Heart right ventricle (tissue), 16 donors: ENCODE measurements at regions of chr12 and their contacts with region 1.

Region 1: GRCh38 chr12:56189176-56189917 is at the start of gene SMARCC2:
- DNase-seq: peak; percentile 87 to 88
- ATAC-seq: peak; percentile 84 to 94 (median 92)
- H3K4me3 ChIP-seq: peak within 1 kb of the TSS; percentile 61 to 92 (median 86)
- H3K27ac ChIP-seq: peak within 1 kb of the TSS; percentile 78 to 95 (median 92)
- H3K4me1 ChIP-seq: peaks cover 6 to 39% (median 27%) of the 10 kb centered on the region in 9 donors
- H3K27me3 ChIP-seq: no peaks in the 10 kb centered on the region
- CTCF ChIP-seq: peak; percentile 63 to 81 (median 74)
- total RNA-seq, gene SMARCC2: 56.2 to 81.9 (median 62.8) TPM

Region 2: GRCh38 chr12:56041552-56042429 is 147.6 kb before region 1 on chr12 and contains the start of gene RPS26:
- intact Hi-C with region 1: loop called in 1 of 10 experiments (anchors 10 kb)
- DNase-seq: peak; percentile 94 to 98
- ATAC-seq: peak; percentile 95 to 99 (median 97)
- H3K4me3 ChIP-seq: peak within 1 kb of the TSS; percentile 57 to 96 (median 80)
- H3K27ac ChIP-seq: peak within 1 kb of the TSS; percentile 92 to 99 (median 97)
- H3K4me1 ChIP-seq: peaks cover 0 to 23% (median 18%) of the 10 kb centered on the region in 9 donors
- H3K27me3 ChIP-seq: no peaks in the 10 kb centered on the region
- CTCF ChIP-seq: peak in 8 of 9 donors; percentile 34 to 69 (median 54)
- total RNA-seq, gene RPS26: 6.9 to 39.6 (median 19.3) TPM

Region 3: GRCh38 chr12:56117778-56118687 is 71.3 kb before region 1 on chr12 and contains the start of gene ZC3H10:
- intact Hi-C with region 1: loop called in 8 of 10 experiments (anchors 1 to 5 kb)
- DNase-seq: peak; percentile 93 to 97
- ATAC-seq: peak; percentile 81 to 91 (median 88)
- H3K4me3 ChIP-seq: peak within 1 kb of the TSS; percentile 53 to 84 (median 74)
- H3K27ac ChIP-seq: peak within 1 kb of the TSS; percentile 82 to 95 (median 91)
- H3K4me1 ChIP-seq: peaks cover 0 to 56% (median 38%) of the 10 kb centered on the region in 9 donors
- H3K27me3 ChIP-seq: no peaks in the 10 kb centered on the region
- CTCF ChIP-seq: peak in 8 of 9 donors; percentile 43 to 78 (median 52)
- total RNA-seq, gene ZC3H10: 3.6 to 5.8 (median 4.9) TPM

Region 4: DNA sequence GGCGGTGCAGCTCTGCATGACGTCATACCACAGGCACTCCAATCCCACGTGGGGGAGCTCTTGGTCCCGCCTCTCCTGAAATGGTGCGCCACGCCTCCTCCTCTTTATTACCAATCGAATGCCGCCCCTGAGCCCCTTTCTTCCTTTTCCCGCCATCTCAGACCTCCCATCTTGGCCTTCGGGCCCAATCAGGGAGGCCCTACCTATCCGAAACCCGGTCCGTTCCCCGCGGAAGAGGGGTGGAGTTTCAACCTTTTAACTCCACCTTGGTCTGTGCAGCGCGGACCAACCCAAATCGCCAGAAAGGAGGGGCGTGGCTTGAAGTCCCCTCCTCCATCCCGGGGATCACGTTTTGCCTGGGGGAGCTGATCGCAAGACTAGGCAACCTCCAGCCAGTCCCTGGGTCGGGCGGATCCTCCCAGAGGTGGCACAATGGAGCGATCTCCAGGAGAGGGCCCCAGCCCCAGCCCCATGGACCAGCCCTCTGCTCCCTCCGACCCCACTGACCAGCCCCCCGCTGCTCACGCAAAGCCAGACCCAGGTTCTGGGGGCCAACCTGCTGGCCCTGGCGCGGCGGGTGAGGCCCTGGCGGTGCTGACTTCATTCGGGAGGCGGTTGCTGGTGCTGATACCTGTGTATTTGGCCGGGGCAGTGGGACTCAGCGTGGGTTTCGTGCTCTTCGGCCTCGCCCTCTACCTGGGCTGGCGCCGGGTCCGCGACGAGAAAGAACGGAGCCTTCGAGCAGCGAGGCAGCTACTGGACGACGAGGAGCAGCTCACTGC is 61.3 kb before region 1 on chr12 and contains the start of gene ESYT1:
- intact Hi-C with region 1: loop called in 6 of 10 experiments (anchors 1 to 5 kb)
- DNase-seq: peak; percentile 95 to 99
- ATAC-seq: peak; percentile 94 to 97 (median 96)
- H3K4me3 ChIP-seq: peak within 1 kb of the TSS; percentile 53 to 94 (median 84)
- H3K27ac ChIP-seq: peak within 1 kb of the TSS; percentile 51 to 94 (median 88)
- H3K4me1 ChIP-seq: peaks cover 8 to 61% (median 44%) of the 10 kb centered on the region in 9 donors
- H3K27me3 ChIP-seq: no peaks in the 10 kb centered on the region
- CTCF ChIP-seq: peak in 1 of 9 donors; percentile 18
- total RNA-seq, gene ESYT1: 28.8 to 47.5 (median 31.9) TPM

Region 5: DNA sequence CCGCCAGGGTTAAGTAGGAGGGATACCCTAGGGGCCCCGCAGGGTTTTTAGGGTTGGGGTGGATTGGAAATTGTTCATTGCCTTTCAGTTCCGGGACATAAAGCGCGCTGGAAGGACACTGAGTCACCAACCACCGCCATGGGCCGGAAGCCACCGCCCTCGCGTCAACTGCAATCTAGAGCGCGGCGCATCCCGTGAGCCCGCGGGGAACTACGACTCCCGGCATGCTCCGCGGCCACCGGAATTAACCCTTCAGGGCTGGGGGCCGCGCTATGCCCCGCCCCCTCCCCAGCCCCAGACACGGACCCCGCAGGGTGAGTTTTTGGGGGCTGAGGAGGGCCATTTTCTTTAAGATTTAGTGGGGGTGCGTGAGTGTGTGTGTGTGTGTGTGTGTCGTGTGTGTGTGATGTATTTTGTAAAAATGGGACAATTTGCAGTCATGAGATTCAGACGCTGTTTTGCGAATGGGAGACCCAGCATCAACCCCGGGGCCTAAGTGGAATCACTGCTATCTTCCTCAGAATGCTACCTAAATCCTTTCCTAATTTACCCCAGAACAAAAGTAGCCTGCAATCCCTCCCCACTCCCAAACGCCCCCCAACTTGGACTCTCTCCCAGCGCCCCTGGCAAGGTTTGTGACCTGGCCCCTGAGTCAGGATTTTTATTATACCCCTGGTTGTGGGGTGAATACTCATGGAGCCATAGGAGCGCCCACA is 36.9 kb before region 1 on chr12 and contains the start of gene MYL6B:
- intact Hi-C with region 1: loop called in 1 of 10 experiments (anchors 2 kb)
- DNase-seq: peak; percentile 93 to 94
- ATAC-seq: peak; percentile 93 to 98 (median 96)
- H3K4me3 ChIP-seq: peak within 1 kb of the TSS; percentile 38 to 85 (median 69)
- H3K27ac ChIP-seq: peak within 1 kb of the TSS; percentile 89 to 97 (median 93)
- H3K4me1 ChIP-seq: peaks cover 4 to 41% (median 35%) of the 10 kb centered on the region in 9 donors
- H3K27me3 ChIP-seq: no peaks in the 10 kb centered on the region
- CTCF ChIP-seq: no peak
- total RNA-seq, gene MYL6B: 39.8 to 61.9 (median 49.9) TPM

Region 6: GRCh38 chr12:56158029-56158925 is 31.1 kb before region 1 on chr12 and contains the start of gene MYL6:
- intact Hi-C with region 1: loop called in 3 of 10 experiments (anchors 2 kb)
- DNase-seq: peak; percentile 86 to 99
- ATAC-seq: peak; percentile 85 to 96 (median 93)
- H3K4me3 ChIP-seq: peak within 1 kb of the TSS; percentile 73 to 98 (median 91)
- H3K27ac ChIP-seq: peak within 1 kb of the TSS; percentile 93 to 99 (median 98)
- H3K4me1 ChIP-seq: peaks cover 20 to 53% (median 42%) of the 10 kb centered on the region in 9 donors
- H3K27me3 ChIP-seq: no peaks in the 10 kb centered on the region
- CTCF ChIP-seq: no peak
- total RNA-seq, gene MYL6: 355 to 1,188 (median 413) TPM

Region 7: GRCh38 chr12:56224102-56224701 is 34.9 kb after region 1 on chr12 and contains the start of gene NABP2:
- intact Hi-C with region 1: loop called in 6 of 10 experiments (anchors 1 to 5 kb)
- DNase-seq: peak; percentile 98
- ATAC-seq: peak; percentile 83 to 92 (median 89)
- H3K4me3 ChIP-seq: peak within 1 kb of the TSS; percentile 50 to 78 (median 70)
- H3K27ac ChIP-seq: peak within 1 kb of the TSS; percentile 51 to 99 (median 88)
- H3K4me1 ChIP-seq: peaks cover 4 to 49% (median 39%) of the 10 kb centered on the region in 9 donors
- H3K27me3 ChIP-seq: no peaks in the 10 kb centered on the region
- CTCF ChIP-seq: peak; percentile 76 to 98 (median 89)
- total RNA-seq, gene NABP2: 16.2 to 25.3 (median 20.4) TPM